HCT116 (cell line): ENCODE measurements at regions of chrX and their contacts with region 1.

Region 1: GRCh38 chrX:53211391-53211978 is 13.5 kb downstream of the KDM5C start:
- DNase-seq: no peak
- ATAC-seq: no peak
- H3K4me3 ChIP-seq: no peak overlapping the region
- H3K27ac ChIP-seq: no peak overlapping the region
- H3K4me1 ChIP-seq: no peaks in the 10 kb centered on the region
- H3K27me3 ChIP-seq: no peaks in the 10 kb centered on the region
- CTCF ChIP-seq: no peak
- POLR2A ChIP-seq: no peak
- RAD21 ChIP-seq: no peak

Region 2: DNA sequence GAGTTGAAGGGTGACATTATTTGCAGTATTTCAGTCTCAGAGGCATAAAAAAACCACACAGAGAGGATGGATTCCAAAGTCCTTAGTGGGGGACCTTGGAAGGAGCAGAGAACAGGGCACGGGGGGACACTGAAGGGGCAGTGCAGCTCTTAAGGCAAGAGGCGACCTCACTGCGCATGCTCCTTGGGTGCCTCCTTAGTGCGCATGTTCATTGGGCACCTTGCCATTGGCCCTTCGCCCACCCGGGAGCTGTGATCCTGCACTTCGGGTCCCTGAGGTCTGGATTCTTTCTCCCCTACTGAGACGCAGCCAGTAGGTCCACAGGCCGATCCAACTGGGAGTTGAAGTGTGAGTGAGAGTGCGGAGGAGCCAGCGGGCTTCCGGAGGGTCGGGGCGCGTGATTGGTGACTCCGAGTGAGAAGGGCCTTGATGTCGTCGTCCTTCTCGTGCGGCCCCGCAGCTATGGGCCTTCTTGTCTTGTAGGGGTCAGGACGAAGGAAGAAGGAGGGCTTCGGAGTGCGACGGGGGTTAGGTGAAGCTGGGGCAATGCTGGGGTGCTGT is 400.3 kb before region 1 on chrX and contains the start of gene XAGE5:
- CTCF ChIA-PET with region 1: no interaction called
- POLR2A ChIA-PET with region 1: no interaction called
- RAD21 ChIA-PET with region 1: no interaction called
- intact Hi-C with region 1: no loop called
- DNase-seq: no peak
- ATAC-seq: no peak
- H3K4me3 ChIP-seq: no peak within 1 kb of the TSS
- H3K27ac ChIP-seq: no peak within 1 kb of the TSS
- H3K4me1 ChIP-seq: no peaks in the 10 kb centered on the region
- H3K27me3 ChIP-seq: peaks cover 3% of the 10 kb centered on the region
- CTCF ChIP-seq: no peak
- POLR2A ChIP-seq: no peak
- RAD21 ChIP-seq: no peak
- total RNA-seq, gene XAGE5: not detected

Region 3: DNA sequence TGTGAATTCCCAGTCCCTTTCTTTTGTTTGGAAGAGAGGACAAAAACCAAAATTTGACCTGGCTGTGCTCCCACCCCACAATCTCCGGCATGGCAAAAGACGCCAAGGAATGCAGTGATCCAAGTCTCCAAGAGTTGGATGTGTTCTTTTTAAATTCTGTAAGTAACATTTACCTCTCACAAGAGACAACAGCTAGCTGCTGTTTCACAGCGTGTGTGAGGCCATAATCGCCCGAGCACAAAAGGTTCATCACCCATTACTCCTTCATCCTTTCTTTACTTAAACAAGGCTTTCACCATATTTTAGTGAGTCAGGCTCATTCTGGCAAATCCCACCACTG is 227.9 kb before region 1 on chrX:
- CTCF ChIA-PET with region 1: no interaction called
- POLR2A ChIA-PET with region 1: no interaction called
- RAD21 ChIA-PET with region 1: no interaction called
- intact Hi-C with region 1: no loop called
- DNase-seq: no peak
- ATAC-seq: no peak
- H3K4me3 ChIP-seq: no peak overlapping the region
- H3K27ac ChIP-seq: no peak overlapping the region
- H3K4me1 ChIP-seq: peaks cover 4 to 17% of the 10 kb centered on the region in 2 experiments
- H3K27me3 ChIP-seq: no peaks in the 10 kb centered on the region
- CTCF ChIP-seq: no peak
- POLR2A ChIP-seq: no peak
- RAD21 ChIP-seq: no peak

Region 4: DNA sequence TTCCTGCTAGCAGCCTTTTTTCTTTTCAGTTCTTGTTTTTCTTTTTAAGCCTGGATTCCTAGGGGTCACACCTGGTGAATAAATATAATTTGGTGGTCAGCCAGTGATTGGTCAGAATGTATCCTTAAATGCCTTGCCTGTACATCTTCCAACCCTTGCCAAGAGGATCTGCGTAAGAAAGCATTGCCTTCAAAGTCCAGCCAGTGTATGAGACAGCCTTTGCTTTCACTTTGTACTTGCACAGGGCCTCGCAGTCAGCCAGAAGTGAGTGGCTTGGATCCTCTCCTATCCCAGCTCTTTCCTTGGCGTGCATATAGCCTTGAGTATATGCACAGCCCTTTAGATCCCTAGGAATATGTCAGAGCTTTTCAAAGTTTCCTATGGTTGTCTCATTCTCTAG is 95.4 kb before region 1 on chrX:
- CTCF ChIA-PET with region 1: no interaction called
- POLR2A ChIA-PET with region 1: no interaction called
- RAD21 ChIA-PET with region 1: no interaction called
- intact Hi-C with region 1: loop called (anchors 10 kb)
- DNase-seq: no peak
- ATAC-seq: no peak
- H3K4me3 ChIP-seq: no peak overlapping the region
- H3K27ac ChIP-seq: no peak overlapping the region
- H3K4me1 ChIP-seq: no peaks in the 10 kb centered on the region
- H3K27me3 ChIP-seq: no peaks in the 10 kb centered on the region
- CTCF ChIP-seq: no peak
- POLR2A ChIP-seq: no peak
- RAD21 ChIP-seq: no peak